SK-N-SH (cell line): ENCODE measurements at regions of chr15 and their contacts with region 1.

Region 1: DNA sequence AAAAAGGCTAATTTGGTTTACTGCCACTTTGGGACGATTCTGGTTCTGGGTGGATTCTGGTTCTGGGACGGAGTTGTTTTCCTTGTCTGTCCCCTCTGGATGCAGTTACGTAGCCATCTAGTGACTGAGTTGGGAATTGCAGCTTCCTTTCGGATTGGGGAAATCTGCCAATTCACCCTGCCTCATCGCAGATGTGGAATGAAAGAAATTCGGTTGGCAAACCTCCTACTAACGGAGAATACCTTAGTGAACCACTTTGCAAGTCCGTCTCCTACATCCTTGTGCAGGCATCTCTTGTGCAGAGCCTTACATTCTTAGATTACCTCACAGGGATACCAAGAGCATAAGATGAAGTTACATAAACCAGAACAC is 31.5 kb upstream of the AP4E1 start:
- DNase-seq: peak; percentile 76
- H3K4me3 ChIP-seq: peak overlapping the region; percentile 42 to 55; a peak in 3 of 4 replicates
- H3K27ac ChIP-seq: no peak overlapping the region
- H3K4me1 ChIP-seq: peaks cover 0 to 20% of the 10 kb centered on the region in 2 experiments; a peak in 1 of 4 replicates
- H3K27me3 ChIP-seq: peaks cover 5% of the 10 kb centered on the region; the same call in 1 of the 2 replicates
- CTCF ChIP-seq: peak; percentile 97
- EP300 ChIP-seq: no peak
- RAD21 ChIP-seq: peak; percentile 94

Region 2: DNA sequence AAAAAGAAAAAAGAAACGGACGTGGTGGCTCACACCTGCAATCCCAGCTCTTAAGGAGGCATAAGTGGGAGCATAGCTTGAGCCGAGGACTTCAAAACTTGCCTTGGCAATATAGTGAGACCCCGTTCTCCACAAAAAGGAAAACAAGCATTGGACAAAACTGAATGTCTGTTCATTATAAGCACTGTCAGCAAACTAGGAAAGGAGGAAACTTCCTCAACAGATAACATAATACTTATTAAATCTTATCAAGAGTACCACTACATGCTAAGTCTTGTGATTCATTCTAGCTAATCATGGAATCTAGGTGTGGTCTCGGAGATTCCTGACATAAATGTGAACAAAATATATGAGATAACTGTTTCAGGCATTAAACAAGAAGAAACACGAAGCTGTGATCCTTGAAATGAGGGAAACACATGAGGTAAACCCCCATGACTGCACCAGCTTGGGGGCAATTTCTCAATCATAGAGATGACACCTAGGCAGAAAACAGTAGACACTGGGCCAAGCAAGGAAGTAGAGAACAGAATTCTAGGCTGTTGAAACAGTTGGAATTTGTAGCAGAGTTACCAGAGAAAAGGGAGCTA is 223.7 kb before region 1 on chr15:
- CTCF ChIA-PET with region 1: interaction called, 10 read pairs
- POLR2A ChIA-PET with region 1: no interaction called
- DNase-seq: no peak
- H3K4me3 ChIP-seq: no peak overlapping the region
- H3K27ac ChIP-seq: no peak overlapping the region
- H3K4me1 ChIP-seq: no peaks in the 10 kb centered on the region
- H3K27me3 ChIP-seq: no peaks in the 10 kb centered on the region
- CTCF ChIP-seq: no peak
- EP300 ChIP-seq: no peak
- RAD21 ChIP-seq: no peak

Region 3: GRCh38 chr15:50675536-50676144 is 201.3 kb before region 1 on chr15:
- CTCF ChIA-PET with region 1: interaction called, 58 read pairs
- POLR2A ChIA-PET with region 1: no interaction called
- DNase-seq: peak; percentile 17
- H3K4me3 ChIP-seq: no peak overlapping the region; a peak in 1 of 4 replicates
- H3K27ac ChIP-seq: no peak overlapping the region
- H3K4me1 ChIP-seq: no peaks in the 10 kb centered on the region
- H3K27me3 ChIP-seq: no peaks in the 10 kb centered on the region
- CTCF ChIP-seq: peak; percentile 93
- EP300 ChIP-seq: no peak
- RAD21 ChIP-seq: peak; percentile 73

Region 4: GRCh38 chr15:50686468-50687301 is 190.3 kb before region 1 on chr15 and contains the start of gene TRPM7:
- CTCF ChIA-PET with region 1: interaction called, 58 read pairs
- POLR2A ChIA-PET with region 1: no interaction called
- DNase-seq: peak; percentile 95
- H3K4me3 ChIP-seq: peak within 1 kb of the TSS; percentile 72 to 90
- H3K27ac ChIP-seq: peak within 1 kb of the TSS; percentile 86 to 92
- H3K4me1 ChIP-seq: peaks cover 6 to 15% of the 10 kb centered on the region in 2 experiments; a peak in 2 of 4 replicates
- H3K27me3 ChIP-seq: no peaks in the 10 kb centered on the region
- CTCF ChIP-seq: no peak; the same call in 1 of the 2 replicates
- EP300 ChIP-seq: no peak
- RAD21 ChIP-seq: no peak
- polyA plus RNA-seq, gene TRPM7: 5.1 and 7.9 TPM in 2 replicates

Region 5: GRCh38 chr15:50758762-50759161 is 118.2 kb before region 1 on chr15:
- CTCF ChIA-PET with region 1: no interaction called
- POLR2A ChIA-PET with region 1: no interaction called
- DNase-seq: no peak
- H3K4me3 ChIP-seq: no peak overlapping the region
- H3K27ac ChIP-seq: no peak overlapping the region
- H3K4me1 ChIP-seq: no peaks in the 10 kb centered on the region
- H3K27me3 ChIP-seq: no peaks in the 10 kb centered on the region
- CTCF ChIP-seq: no peak
- EP300 ChIP-seq: no peak
- RAD21 ChIP-seq: no peak

Region 6: DNA sequence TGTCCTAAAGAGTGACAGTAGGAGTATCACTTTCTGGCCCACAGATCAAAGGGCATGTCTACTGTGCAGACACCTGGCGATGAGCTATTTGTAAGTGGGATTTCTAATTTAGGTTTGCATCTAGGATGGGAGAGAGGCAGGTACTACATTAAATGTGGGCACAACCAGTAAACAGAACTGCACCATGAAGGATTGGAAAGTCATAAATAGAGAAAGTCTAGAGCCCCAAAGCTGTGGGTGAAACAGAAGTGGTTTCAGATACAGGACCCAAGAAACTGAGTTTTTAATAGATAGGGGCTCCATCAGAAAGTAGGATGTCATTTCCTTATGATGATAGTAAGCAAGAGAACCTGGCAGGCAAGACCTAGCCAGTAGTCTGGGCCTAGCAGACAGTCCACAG is 76.3 kb before region 1 on chr15:
- CTCF ChIA-PET with region 1: no interaction called
- POLR2A ChIA-PET with region 1: no interaction called
- DNase-seq: no peak
- H3K4me3 ChIP-seq: no peak overlapping the region
- H3K27ac ChIP-seq: no peak overlapping the region
- H3K4me1 ChIP-seq: no peaks in the 10 kb centered on the region
- H3K27me3 ChIP-seq: no peaks in the 10 kb centered on the region
- CTCF ChIP-seq: no peak
- EP300 ChIP-seq: no peak
- RAD21 ChIP-seq: no peak

Region 7: DNA sequence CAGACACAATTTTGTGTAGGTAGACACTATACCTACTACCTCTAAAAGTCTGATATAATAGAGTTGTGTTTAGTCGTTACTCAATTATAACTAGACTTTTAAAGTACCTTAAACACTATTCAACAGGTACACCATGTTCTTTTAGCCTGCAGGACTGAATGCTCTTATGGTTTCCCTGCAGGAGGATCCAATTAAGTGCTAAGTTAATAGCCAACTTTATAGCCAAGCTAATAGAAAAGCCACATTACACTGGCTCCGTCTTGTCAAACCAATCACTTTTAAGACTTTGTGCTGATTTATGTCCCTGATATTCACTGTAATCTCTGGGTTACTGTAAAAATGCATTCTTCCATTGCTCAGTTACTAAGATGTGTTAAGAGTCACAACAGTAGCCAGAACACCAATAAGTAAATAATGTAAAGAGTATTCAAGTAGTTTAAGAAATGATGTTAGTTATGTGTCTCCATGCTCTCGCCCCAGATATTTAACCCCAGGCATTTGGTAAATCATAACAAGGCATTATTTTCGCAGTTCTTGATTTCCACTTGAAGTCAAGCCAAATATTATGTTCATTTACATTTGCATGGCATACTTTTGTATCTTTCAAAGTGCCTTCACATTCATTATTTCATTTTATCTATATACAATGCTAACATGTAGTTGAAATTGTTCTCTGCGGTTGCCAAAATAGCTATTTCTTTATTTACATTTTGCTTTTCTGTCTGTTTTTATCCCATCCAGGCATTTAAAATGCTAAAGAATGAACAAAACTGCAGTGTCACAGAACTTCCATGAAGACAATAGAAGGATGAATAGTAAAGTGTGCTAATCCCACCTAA is 11.2 kb before region 1 on chr15:
- CTCF ChIA-PET with region 1: interaction called, 29 read pairs
- POLR2A ChIA-PET with region 1: no interaction called
- DNase-seq: no peak
- H3K4me3 ChIP-seq: no peak overlapping the region
- H3K27ac ChIP-seq: no peak overlapping the region
- H3K4me1 ChIP-seq: no peaks in the 10 kb centered on the region
- H3K27me3 ChIP-seq: no peaks in the 10 kb centered on the region
- CTCF ChIP-seq: no peak
- EP300 ChIP-seq: no peak
- RAD21 ChIP-seq: no peak